ENCODE measurements at regions of chr9 and their contacts with region 1.

Region 1: GRCh38 chr9:108671176-108671575 is 184.6 kb downstream of the ACTL7B start:
- DNase-seq: peak; percentile 62
- H3K4me3 ChIP-seq: no peak overlapping the region
- H3K27ac ChIP-seq: no peak overlapping the region
- H3K4me1 ChIP-seq: no peaks in the 10 kb centered on the region
- H3K27me3 ChIP-seq: no peaks in the 10 kb centered on the region
- CTCF ChIP-seq: peak; percentile 56

Region 2: DNA sequence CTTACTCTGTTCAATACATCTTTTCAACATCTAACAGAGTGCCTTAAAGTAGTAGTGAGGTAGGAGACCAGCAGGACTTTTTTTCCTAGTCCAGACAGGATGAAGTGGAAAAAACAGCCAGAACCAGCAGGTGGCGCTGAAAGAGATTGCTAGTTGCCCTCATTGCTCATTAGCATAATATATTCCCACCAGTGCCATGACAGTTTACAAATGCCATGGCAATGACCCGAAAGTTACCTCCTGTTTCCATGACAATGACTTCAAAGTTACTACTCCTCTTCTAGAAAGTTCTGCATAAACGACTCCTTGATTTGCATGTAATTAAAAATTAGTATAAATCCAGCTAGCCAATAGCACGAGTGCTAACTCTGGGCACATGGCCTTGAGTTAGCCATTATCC is 202.8 kb before region 1 on chr9:
- CTCF ChIA-PET with region 1: no interaction called
- POLR2A ChIA-PET with region 1: no interaction called
- intact Hi-C with region 1: loop called (anchors 2 kb)
- DNase-seq: peak; percentile 75
- H3K4me3 ChIP-seq: no peak overlapping the region
- H3K27ac ChIP-seq: no peak overlapping the region
- H3K4me1 ChIP-seq: no peaks in the 10 kb centered on the region
- H3K27me3 ChIP-seq: no peaks in the 10 kb centered on the region
- CTCF ChIP-seq: peak; percentile 75

Region 3: GRCh38 chr9:108727580-108728111 is 56.5 kb after region 1 on chr9:
- CTCF ChIA-PET with region 1: no interaction called
- POLR2A ChIA-PET with region 1: no interaction called
- intact Hi-C with region 1: no loop called
- DNase-seq: no peak
- H3K4me3 ChIP-seq: no peak overlapping the region
- H3K27ac ChIP-seq: no peak overlapping the region
- H3K4me1 ChIP-seq: no peaks in the 10 kb centered on the region
- H3K27me3 ChIP-seq: no peaks in the 10 kb centered on the region
- CTCF ChIP-seq: no peak